Endothelial cell of umbilical vein (primary cell): ENCODE measurements at regions of chr19 and their contacts with region 1.

Region 1: GRCh38 chr19:55088543-55089341 is 13.1 kb downstream of the EPS8L1 start:
- DNase-seq: peak; percentile 70
- H3K4me3 ChIP-seq: peak overlapping the region in 2 of 3 experiments; percentile 55 to 77
- H3K27ac ChIP-seq: peak overlapping the region; percentile 67
- H3K4me1 ChIP-seq: peaks cover 18% of the 10 kb centered on the region
- H3K27me3 ChIP-seq: no peaks in the 10 kb centered on the region
- CTCF ChIP-seq: peak; percentile 38 to 72
- POLR2A ChIP-seq: no peak

Region 2: DNA sequence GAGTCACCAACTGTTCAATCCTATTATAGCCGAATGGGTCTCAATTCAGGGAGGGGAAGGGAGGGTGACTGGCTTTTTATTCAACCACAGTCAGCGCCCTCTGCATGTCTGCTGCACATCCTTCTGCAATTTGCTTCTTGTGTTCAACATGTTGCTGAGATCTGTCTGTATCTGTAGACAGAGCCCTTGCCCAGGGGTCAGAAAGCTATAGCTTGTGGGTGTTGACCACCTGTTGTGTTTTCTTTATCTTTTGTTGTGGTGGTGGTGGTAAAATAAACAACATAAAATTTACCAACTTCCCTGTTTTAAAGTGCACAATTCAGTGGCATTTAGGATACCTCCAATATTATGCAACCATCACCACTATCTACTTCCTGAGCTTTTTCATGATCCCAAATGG is 16.5 kb after region 1 on chr19:
- CTCF ChIA-PET with region 1: interaction called, 12 read pairs
- POLR2A ChIA-PET with region 1: no interaction called
- dilution Hi-C with region 1: no loop called
- intact Hi-C with region 1: no loop called
- DNase-seq: no peak
- H3K4me3 ChIP-seq: no peak overlapping the region
- H3K27ac ChIP-seq: no peak overlapping the region
- H3K4me1 ChIP-seq: no peaks in the 10 kb centered on the region
- H3K27me3 ChIP-seq: no peaks in the 10 kb centered on the region
- CTCF ChIP-seq: no peak
- POLR2A ChIP-seq: no peak

Region 3: GRCh38 chr19:55132453-55133129 is 43.8 kb after region 1 on chr19:
- CTCF ChIA-PET with region 1: interaction called, 51 read pairs
- POLR2A ChIA-PET with region 1: no interaction called
- dilution Hi-C with region 1: no loop called
- intact Hi-C with region 1: loop called (anchors 1 kb)
- DNase-seq: no peak
- H3K4me3 ChIP-seq: no peak overlapping the region
- H3K27ac ChIP-seq: no peak overlapping the region
- H3K4me1 ChIP-seq: no peaks in the 10 kb centered on the region
- H3K27me3 ChIP-seq: peaks cover 0 to 4% of the 10 kb centered on the region in 2 experiments
- CTCF ChIP-seq: peak; percentile 15 to 23
- POLR2A ChIP-seq: no peak

Region 4: DNA sequence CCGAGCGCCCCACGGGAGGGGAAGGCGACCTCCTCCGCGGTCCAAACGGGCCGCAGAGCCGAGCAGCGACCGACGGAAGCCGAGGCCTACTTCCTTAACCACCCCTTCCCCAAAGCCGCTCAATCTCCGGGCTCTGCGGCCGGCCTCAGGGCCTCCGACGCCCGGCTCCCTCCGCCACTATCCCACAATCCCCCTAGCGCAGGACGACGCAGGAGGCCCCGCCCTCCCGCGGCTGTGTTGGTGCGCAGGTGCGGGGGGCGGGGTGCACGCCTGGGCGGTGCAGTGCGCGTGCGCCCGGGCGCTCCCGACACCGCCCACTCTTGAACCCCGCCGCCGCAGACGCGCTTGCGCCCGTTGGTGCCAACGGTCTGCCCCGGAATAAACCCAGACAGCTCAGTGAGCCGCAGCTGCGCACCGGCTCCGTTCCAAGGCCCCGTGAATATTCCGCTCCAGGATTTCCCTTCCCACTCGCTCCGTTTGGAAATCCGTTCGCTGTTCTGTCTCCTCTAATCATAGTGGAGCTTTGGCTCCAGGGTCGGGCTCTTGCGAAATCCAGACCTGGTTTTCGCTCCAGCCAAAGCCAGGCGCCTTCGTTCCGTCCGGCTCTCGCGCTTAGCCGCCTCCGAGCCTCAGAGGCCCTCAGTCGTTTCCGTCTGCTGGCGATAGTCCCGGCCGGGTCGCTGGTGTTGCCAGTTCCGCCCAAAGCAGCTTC is 170.2 kb after region 1 on chr19 and contains the start of gene PPP6R1:
- CTCF ChIA-PET with region 1: no interaction called
- POLR2A ChIA-PET with region 1: no interaction called
- dilution Hi-C with region 1: no loop called
- intact Hi-C with region 1: loop called (anchors 1 kb)
- DNase-seq: peak; percentile 100
- H3K4me3 ChIP-seq: peak within 1 kb of the TSS; percentile 73 to 88 (median 87)
- H3K27ac ChIP-seq: peak within 1 kb of the TSS; percentile 86
- H3K4me1 ChIP-seq: peaks cover 40% of the 10 kb centered on the region
- H3K27me3 ChIP-seq: no peaks in the 10 kb centered on the region
- CTCF ChIP-seq: no peak
- POLR2A ChIP-seq: peak; percentile 72
- total RNA-seq, gene PPP6R1: 68.3 and 71.8 TPM in 2 replicates